T-cell (primary cell): ENCODE measurements at regions of chr1 and their contacts with region 1.

Region 1: DNA sequence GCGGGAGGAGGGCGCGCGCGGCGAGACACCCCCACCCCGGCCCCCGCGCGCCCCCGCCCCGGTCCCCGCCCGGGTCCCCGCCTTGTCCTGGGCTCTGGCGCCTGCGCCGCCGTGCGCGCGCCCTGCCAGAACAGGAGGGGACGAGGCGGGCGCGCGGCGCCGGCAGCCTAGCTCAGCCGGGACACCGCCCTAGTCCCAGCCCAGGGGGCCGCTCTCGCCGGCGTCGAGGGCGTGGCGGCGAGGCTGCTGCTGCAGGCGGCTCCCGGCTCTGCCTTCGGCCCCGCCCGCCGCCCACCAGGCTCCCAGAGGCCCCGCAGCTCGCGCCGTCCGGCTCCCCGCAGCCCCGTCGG is at the start of gene RCAN3:
- DNase-seq: peak; percentile 73 to 93 (median 86)
- ATAC-seq: peak; percentile 68 to 81 (median 75)
- H3K4me3 ChIP-seq: peak within 1 kb of the TSS; percentile 81 to 91
- H3K4me3 Mint-ChIP-seq: peak within 1 kb of the TSS; percentile 99 to 100 (median 99)
- H3K27ac ChIP-seq: peak within 1 kb of the TSS; percentile 98
- H3K27ac Mint-ChIP-seq: peak within 1 kb of the TSS; percentile 92 to 99
- H3K4me1 ChIP-seq: peaks cover 39 to 59% of the 10 kb centered on the region in 2 experiments
- H3K4me1 Mint-ChIP-seq: peaks cover 66 to 77% (median 74%) of the 10 kb centered on the region in 3 donors
- H3K27me3 ChIP-seq: no peaks in the 10 kb centered on the region
- H3K27me3 Mint-ChIP-seq: peaks cover 0 to 2% of the 10 kb centered on the region in 2 donors
- total RNA-seq, gene RCAN3: 149 to 202 (median 186) TPM

Region 2: GRCh38 chr1:24415334-24415909 is 87.3 kb before region 1 on chr1 and contains the start of gene NIPAL3:
- CTCF ChIA-PET with region 1: interaction called, 3 to 29 read pairs
- POLR2A ChIA-PET with region 1: interaction called, 6 read pairs
- DNase-seq: peak; percentile 93 to 100 (median 98)
- ATAC-seq: peak; percentile 94 to 98 (median 96)
- H3K4me3 ChIP-seq: peak within 1 kb of the TSS; percentile 85 to 93
- H3K4me3 Mint-ChIP-seq: peak within 1 kb of the TSS; percentile 92 to 99 (median 93)
- H3K27ac ChIP-seq: peak within 1 kb of the TSS; percentile 56
- H3K27ac Mint-ChIP-seq: peak within 1 kb of the TSS; percentile 91 to 93
- H3K4me1 ChIP-seq: peaks cover 31 to 54% of the 10 kb centered on the region in 2 experiments
- H3K4me1 Mint-ChIP-seq: peaks cover 66 to 75% (median 72%) of the 10 kb centered on the region in 3 donors
- H3K27me3 ChIP-seq: no peaks in the 10 kb centered on the region
- H3K27me3 Mint-ChIP-seq: no peaks in the 10 kb centered on the region
- total RNA-seq, gene NIPAL3: 49.0 to 71.4 (median 59.7) TPM

Region 3: DNA sequence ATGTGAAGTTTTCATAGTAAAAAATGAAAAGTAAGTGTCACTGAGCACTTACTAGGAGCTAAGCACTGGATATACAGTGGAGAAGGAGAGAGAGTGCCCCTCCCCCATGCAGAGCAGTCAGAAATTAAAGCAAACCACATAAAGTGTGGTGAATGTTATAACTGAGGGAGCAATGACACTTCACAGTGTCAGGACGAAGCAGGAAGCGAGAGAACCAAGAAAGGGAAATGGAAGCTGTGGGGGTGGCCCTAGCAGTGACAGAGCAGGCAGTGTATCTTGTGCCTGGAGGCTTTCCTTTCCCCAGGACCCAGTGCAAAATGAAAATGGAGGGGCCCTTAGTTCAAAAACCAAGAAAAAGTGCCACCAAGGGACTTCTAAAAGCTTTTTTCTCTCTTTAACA is 21.6 kb before region 1 on chr1:
- CTCF ChIA-PET with region 1: interaction called, 4 to 11 read pairs
- POLR2A ChIA-PET with region 1: interaction called, 6 to 30 read pairs
- DNase-seq: peak in 33 of 35 experiments; percentile 28 to 73 (median 53)
- ATAC-seq: peak; percentile 56 to 76 (median 66)
- H3K4me3 ChIP-seq: peak overlapping the region in 1 of 2 donors; percentile 21
- H3K4me3 Mint-ChIP-seq: peak overlapping the region; percentile 25 to 70 (median 63)
- H3K27ac ChIP-seq: peak overlapping the region; percentile 87
- H3K27ac Mint-ChIP-seq: peak overlapping the region; percentile 95 to 96
- H3K4me1 ChIP-seq: peaks cover 49 to 66% of the 10 kb centered on the region in 2 experiments
- H3K4me1 Mint-ChIP-seq: peaks cover 70 to 85% (median 73%) of the 10 kb centered on the region in 3 donors
- H3K27me3 ChIP-seq: no peaks in the 10 kb centered on the region
- H3K27me3 Mint-ChIP-seq: no peaks in the 10 kb centered on the region

Region 4: DNA sequence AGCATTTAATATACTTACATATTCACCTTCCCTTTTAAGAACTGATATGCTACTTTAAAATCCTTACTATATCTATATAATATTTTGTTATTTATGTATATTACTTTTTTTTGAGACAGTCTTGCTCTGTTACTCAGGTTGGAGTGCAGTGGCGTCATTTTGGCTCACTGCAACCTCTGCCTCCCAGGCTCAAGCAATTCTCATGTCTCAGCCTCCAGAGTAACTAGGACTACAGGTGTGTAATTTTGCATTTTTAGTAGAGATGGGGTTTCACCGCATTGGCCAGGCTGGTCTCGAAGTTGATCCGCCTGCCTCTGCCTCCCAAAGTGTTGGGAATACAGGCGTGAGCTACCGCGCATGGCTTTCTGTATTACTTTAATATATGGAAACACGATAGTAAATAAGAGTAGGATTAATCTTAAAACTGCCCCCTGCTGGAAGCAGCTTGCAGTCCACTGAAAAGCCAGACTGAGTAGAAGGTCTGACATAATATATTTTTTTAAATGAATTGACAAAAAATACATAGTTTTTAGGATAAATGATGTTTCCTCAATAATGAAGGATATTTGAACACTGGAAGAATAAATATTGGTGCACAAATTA is 24.4 kb after region 1 on chr1:
- CTCF ChIA-PET with region 1: interaction called in 1 of 2 experiments, 19 read pairs
- POLR2A ChIA-PET with region 1: interaction called, 3 to 6 read pairs
- DNase-seq: peak in 30 of 35 experiments; percentile 19 to 71 (median 46)
- ATAC-seq: peak in 3 of 4 experiments; percentile 58 to 72 (median 68)
- H3K4me3 ChIP-seq: no peak overlapping the region
- H3K4me3 Mint-ChIP-seq: no peak overlapping the region
- H3K27ac ChIP-seq: peak overlapping the region; percentile 2
- H3K27ac Mint-ChIP-seq: peak overlapping the region; percentile 68 to 86
- H3K4me1 ChIP-seq: peaks cover 18 to 27% of the 10 kb centered on the region in 2 experiments
- H3K4me1 Mint-ChIP-seq: peaks cover 69 to 75% (median 72%) of the 10 kb centered on the region in 3 donors
- H3K27me3 ChIP-seq: no peaks in the 10 kb centered on the region
- H3K27me3 Mint-ChIP-seq: no peaks in the 10 kb centered on the region